Common myeloid progenitor, CD34-positive (primary cell): ENCODE measurements at regions of chr6 and their contacts with region 1.

Region 1: DNA sequence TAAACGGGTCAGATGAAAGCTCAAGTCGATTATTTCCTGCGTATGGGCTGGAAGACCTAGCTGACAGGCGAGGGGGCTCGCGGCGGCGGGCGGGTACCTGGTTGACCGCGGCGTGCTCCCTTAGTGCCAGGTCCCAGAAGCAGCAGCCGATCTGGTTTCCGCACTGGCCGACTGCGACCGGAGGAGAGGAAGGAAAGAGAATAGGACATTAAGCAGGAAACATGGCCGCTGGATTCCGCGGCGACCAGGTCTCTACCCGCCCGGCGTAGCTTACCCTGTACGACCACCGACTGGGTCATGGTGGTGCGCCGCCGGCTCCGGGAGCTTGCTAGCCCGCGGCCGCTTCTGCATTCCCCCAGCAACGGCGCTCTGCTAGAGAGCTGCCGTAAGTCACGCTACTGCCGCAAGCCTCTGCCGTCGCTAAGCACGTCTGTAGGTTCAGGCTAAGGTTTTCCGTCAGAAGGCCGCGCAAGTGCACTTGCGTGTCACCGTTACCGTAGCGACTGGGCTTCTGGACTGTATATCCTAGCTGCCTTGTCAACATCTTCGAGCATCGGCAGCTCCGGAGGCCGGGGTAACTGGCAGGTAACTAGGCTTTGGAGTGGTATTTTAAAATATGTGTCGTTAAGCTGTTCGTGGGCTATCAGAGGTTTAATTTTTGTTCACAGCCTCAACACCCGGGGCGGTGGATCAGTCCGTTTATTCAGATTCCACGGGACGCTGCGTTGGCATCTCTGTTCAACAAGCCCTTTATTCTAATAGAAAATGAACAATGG is at the starts of genes FAM229B and TUBE1:
- DNase-seq: peak; percentile 98 to 100 (median 99)
- H3K4me3 ChIP-seq: peak within 1 kb of the TSS; percentile 88 to 99 (median 94)
- H3K27ac ChIP-seq: peak within 1 kb of the TSS; percentile 85 to 96
- H3K4me1 ChIP-seq: peaks cover 0 to 10% (median 4%) of the 10 kb centered on the region in 4 experiments
- H3K27me3 ChIP-seq: no peaks in the 10 kb centered on the region

Region 2: GRCh38 chr6:111973118-111973761 is 114.1 kb before region 1 on chr6:
- CTCF ChIA-PET with region 1: no interaction called
- POLR2A ChIA-PET with region 1: no interaction called
- DNase-seq: peak in 1 of 3 donors; percentile 8
- H3K4me3 ChIP-seq: no peak overlapping the region
- H3K27ac ChIP-seq: no peak overlapping the region
- H3K4me1 ChIP-seq: no peaks in the 10 kb centered on the region
- H3K27me3 ChIP-seq: no peaks in the 10 kb centered on the region

Region 3: GRCh38 chr6:111985202-111985731 is 102.1 kb before region 1 on chr6:
- CTCF ChIA-PET with region 1: no interaction called
- POLR2A ChIA-PET with region 1: no interaction called
- DNase-seq: peak in 1 of 3 donors; percentile 17
- H3K4me3 ChIP-seq: no peak overlapping the region
- H3K27ac ChIP-seq: no peak overlapping the region
- H3K4me1 ChIP-seq: no peaks in the 10 kb centered on the region
- H3K27me3 ChIP-seq: no peaks in the 10 kb centered on the region

Region 4: DNA sequence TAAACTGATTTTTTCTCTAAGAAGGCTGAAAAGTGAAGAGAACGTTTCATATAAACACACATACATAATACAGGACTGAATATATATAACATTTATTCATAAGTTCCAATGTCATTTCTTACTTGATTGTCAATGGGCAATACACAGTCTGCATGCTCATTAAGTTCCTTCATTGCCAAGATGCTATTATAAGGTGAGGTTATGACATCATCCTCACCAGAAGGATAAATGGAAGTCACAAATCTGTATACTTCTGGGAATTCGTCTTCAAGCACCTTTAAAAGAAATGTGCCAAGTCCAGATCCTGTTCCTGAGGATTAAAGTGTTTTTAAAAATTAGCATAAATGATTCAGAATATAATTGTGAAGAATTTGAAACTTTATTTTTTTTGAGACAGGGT is 11.1 kb before region 1 on chr6:
- CTCF ChIA-PET with region 1: interaction called, 13 read pairs
- POLR2A ChIA-PET with region 1: interaction called, 3 read pairs
- DNase-seq: no peak
- H3K4me3 ChIP-seq: no peak overlapping the region
- H3K27ac ChIP-seq: no peak overlapping the region
- H3K4me1 ChIP-seq: no peaks in the 10 kb centered on the region
- H3K27me3 ChIP-seq: no peaks in the 10 kb centered on the region

Region 5: DNA sequence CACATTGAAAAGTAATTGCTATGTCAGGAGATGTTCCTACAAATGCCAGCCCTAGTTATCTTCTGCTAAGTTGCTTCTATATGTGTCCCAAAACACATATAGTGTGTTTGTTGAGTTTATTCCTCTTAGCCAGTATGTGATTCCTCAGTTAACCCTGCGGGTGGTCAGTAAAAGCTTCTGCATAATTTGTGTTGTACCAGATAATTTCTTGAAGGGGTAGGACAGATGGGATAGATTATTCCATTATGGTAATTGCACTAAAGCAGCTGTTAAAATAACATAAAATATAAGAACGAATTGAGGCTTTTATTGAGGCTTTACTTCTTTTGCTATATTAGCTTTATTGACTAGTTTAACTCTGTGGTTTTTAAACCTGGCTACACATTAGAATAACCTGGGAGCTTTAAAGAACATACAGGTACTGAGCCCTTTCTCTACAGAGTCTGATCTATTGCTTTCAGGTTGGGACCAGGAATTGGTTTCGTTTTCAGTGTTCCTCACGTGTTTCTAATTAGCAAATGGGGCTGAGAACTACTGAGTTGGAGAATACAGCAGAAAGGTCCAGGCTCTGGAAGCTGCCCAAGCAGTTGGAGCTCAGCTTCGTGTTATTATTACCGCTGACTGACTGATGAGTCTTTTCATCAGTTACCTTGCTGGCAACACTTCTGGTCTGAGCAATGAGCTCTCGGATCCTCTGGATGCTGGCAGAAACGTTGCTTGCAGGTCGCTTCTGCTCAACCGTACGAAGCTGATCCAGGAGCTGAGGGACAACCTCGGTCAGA is 57.0 kb after region 1 on chr6:
- CTCF ChIA-PET with region 1: no interaction called
- POLR2A ChIA-PET with region 1: no interaction called
- DNase-seq: no peak
- H3K4me3 ChIP-seq: no peak overlapping the region
- H3K27ac ChIP-seq: no peak overlapping the region
- H3K4me1 ChIP-seq: peaks cover 0 to under 1% (median 0%) of the 10 kb centered on the region in 4 experiments
- H3K27me3 ChIP-seq: no peaks in the 10 kb centered on the region

Region 6: DNA sequence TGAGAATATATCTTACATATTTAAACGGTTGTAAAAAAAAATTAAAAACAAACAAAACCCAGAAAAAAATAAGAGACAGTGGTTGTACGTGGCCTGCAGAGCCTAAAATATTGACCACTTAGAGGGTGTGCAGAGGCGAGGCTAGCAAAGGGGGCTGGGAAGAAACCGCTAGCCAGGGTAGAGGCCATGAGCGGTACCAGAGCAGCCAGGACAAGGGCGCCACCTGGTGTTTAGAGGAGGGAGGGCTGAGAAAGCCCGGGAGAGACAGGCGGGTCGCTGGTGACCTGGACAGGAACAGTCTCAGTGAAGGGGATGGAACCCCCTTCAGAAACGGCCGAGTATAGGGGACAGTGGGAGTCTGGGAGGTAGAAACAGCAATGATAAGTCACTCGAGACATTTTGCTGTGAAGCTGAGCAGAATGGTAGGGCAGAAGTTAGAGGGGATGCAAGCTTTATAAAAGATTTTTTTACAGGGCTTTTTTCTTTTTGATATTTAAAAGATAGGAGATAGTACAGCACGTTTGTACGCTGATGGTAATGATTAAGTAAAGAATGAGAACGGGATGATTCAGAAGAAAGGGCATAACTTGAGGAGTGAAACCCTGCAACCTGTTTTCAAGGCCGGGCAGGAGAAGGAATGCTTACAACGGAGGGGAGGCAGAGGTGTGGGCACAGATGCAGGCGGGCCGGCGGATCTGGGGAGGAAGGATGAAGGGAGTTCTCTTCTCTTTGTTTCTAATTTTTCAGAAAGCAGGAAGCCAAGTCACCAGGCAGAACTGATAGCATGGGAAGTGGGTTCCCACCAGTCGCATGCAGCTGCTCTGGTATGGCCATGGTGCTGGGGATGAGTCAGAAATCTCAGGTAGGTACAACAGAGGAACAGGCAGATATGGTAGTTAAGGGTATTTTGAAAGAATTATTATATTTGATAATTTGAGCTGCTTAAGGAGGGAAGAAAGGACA is 76.3 kb after region 1 on chr6:
- CTCF ChIA-PET with region 1: interaction called, 21 read pairs
- POLR2A ChIA-PET with region 1: no interaction called
- DNase-seq: peak; percentile 57 to 89 (median 81)
- H3K4me3 ChIP-seq: peak overlapping the region in 5 of 7 experiments; percentile 16 to 68 (median 47)
- H3K27ac ChIP-seq: no peak overlapping the region
- H3K4me1 ChIP-seq: peaks cover 0 to 15% (median 12%) of the 10 kb centered on the region in 4 experiments
- H3K27me3 ChIP-seq: peaks cover 0 to 4% (median 0%) of the 10 kb centered on the region in 5 experiments